Tibial artery (tissue), 4 donors: ENCODE measurements at regions of chr11 and their contacts with region 1.

Region 1: GRCh38 chr11:126310228-126310991 is 6.5 kb downstream of the DCPS start:
- DNase-seq: peak; percentile 75 to 83
- H3K4me3 ChIP-seq: no peak overlapping the region
- H3K27ac ChIP-seq: no peak overlapping the region
- H3K4me1 ChIP-seq: peaks cover 0 to 6% (median 2%) of the 10 kb centered on the region in 4 donors
- H3K27me3 ChIP-seq: no peaks in the 10 kb centered on the region
- CTCF ChIP-seq: peak; percentile 81 to 88

Region 2: GRCh38 chr11:126416542-126417090 is 106.2 kb after region 1 on chr11:
- intact Hi-C with region 1: loop called (anchors 10 kb)
- DNase-seq: peak; percentile 86 to 94
- H3K4me3 ChIP-seq: peak overlapping the region; percentile 57
- H3K27ac ChIP-seq: peak overlapping the region; percentile 74 to 83
- H3K4me1 ChIP-seq: peaks cover 0 to 44% (median 37%) of the 10 kb centered on the region in 4 donors
- H3K27me3 ChIP-seq: no peaks in the 10 kb centered on the region
- CTCF ChIP-seq: no peak

Region 3: DNA sequence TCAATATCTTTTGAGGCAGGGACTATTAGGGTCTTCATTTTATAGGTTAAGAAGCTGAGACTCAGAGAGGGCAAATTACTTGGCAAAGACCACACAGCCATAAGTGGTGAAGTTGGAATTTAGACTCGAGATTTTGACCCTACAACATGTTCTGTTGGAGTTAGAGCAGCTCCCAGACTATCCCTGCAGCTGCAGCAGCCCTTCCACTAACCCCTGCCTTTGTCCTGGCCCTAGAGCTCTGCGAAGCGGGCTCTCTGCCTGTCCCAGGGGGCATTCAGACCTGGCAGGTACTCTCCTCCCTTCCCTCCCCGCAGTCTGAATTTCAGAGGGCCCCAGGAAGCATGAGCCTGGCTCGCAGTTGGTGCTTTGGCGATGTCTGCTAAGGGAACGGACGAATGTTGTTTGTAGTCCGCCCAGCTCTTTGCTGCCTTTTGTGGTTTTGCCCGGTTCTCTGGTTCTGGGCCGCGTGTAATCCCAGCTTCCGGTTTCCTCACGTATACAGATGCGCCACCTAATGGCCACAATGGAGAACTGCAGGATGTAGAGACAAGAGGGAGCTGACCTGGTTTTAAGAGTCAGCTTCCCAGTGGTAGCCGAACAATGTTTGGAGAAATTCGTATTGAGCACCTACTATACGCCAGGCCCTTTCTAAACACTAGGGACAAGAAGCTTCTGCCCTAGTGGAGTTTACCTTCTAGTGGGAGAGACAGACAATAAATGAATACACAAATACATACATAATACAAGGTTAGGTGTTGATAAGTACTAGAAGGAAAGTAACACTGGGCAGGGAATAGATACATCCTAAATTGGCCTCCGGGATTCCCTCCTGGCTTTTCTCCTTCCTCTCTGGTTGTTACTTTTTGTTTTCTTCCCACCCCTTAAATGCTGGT is 170.2 kb after region 1 on chr11:
- intact Hi-C with region 1: loop called (anchors 5 kb)
- DNase-seq: peak; percentile 89 to 90
- H3K4me3 ChIP-seq: peak overlapping the region; percentile 11 to 18
- H3K27ac ChIP-seq: peak overlapping the region; percentile 49 to 69
- H3K4me1 ChIP-seq: peaks cover 0 to 4% (median 0%) of the 10 kb centered on the region in 4 donors
- H3K27me3 ChIP-seq: peaks cover 0 to 10% of the 10 kb centered on the region in 2 donors
- CTCF ChIP-seq: peak; percentile 90 to 95